A549 (cell line): ENCODE measurements at regions of chr22 and their contacts with region 1.

Region 1: GRCh38 chr22:24938741-24939341 is 7.7 kb downstream of the LHFPL7 start:
- DNase-seq: peak; percentile 40 to 42
- ATAC-seq: peak; percentile 65 to 78; a peak in 4 of 6 replicates
- H3K4me3 ChIP-seq: no peak overlapping the region
- H3K27ac ChIP-seq: no peak overlapping the region
- H3K4me1 ChIP-seq: no peaks in the 10 kb centered on the region
- CTCF ChIP-seq: peak; percentile 70
- EP300 ChIP-seq: no peak
- POLR2A ChIP-seq: no peak
- RAD21 ChIP-seq: peak; percentile 64 to 74

Region 2: DNA sequence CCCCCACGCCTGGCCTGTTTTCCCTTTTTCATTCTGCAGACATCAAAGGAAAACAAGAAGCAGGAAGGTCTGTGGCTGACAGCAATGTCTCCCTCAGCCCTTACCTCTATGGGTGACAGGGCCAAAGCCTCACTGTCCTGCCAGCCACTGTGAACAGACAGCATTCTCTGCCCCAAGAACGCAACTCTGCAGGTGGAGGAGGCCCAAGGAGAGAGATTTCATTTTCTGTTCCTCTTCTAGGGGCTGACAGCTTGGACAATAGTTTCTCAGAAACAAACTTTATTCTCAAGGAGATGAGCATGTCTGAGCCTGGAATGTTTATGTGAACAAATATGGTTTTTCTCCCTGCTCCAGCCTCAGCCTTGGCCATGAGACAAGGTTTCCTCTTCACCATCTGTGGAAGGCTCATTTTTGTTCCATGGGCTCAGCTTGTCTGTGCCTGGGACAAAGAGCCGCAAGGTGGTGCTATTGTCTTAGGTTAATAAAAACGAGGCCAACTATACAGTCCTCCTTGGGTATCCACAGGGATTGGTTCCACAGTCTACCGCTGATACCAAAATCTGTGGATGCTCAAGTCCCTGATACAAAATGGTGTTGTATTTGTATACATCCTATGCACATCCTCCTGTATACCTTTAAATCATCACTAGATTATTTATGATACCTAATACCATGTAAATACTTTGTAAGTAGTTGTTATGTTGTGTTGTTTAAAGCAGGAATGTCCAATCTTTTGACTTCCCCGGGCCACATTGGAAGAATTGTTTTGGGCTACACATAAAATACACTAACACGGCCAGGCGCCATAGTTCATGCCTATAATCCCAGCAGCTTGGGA is 170.1 kb before region 1 on chr22:
- CTCF ChIA-PET with region 1: interaction called, 25 read pairs
- POLR2A ChIA-PET with region 1: no interaction called
- DNase-seq: peak; percentile 61 to 68
- ATAC-seq: peak; percentile 91 to 95
- H3K4me3 ChIP-seq: no peak overlapping the region
- H3K27ac ChIP-seq: no peak overlapping the region
- H3K4me1 ChIP-seq: no peaks in the 10 kb centered on the region
- CTCF ChIP-seq: peak; percentile 58
- EP300 ChIP-seq: no peak
- POLR2A ChIP-seq: no peak
- RAD21 ChIP-seq: peak; percentile 76

Region 3: DNA sequence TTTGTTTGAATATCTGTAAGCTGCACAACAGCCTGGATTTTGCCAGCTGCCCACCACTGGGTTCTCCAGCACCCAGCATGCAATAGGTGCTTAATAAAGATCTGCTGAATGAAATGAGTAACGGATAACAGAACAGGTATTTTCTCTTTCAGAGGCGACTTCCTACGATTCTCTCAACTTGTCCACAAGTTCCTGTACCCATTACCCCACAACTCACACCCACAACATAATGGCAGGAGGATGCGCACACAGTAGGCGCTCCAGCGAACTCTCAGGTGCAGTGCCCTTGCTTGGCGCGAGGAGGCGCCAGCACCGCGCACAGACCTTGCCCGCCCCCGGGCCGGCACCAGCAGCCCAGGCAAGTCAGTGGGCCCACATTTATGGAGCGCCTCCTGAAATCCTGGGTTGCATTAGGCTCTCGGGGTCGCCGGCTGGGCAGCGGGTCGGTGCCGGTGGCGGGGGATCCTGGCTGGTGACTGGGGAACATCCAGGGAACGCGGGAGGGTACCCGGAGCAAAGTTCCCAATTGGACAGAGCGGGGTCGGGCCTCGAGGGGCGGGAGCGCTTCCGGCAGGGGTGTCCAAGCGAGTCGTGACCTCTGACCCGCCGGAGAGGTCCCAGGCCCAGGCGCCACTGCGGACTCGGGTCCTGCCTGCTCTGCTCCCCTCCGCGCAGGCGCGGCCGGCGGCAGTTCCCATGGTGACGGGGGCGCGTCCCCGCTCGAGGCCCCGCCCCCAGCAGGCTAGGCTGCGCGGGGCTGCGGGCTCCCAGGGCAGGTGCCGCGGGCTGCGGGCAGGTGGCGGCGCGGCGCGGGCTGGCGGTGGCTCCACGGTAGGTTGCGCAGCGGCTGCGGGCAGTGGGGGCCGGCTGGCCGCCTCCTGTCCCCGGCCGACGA is 13.3 kb after region 1 on chr22 and contains the start of gene KIAA1671:
- CTCF ChIA-PET with region 1: interaction called, 30 read pairs
- POLR2A ChIA-PET with region 1: no interaction called
- DNase-seq: peak; percentile 71 to 84
- ATAC-seq: peak; percentile 88 to 89
- H3K4me3 ChIP-seq: peak within 1 kb of the TSS; percentile 67
- H3K27ac ChIP-seq: peak within 1 kb of the TSS; percentile 89 to 93
- H3K4me1 ChIP-seq: peaks cover 11% of the 10 kb centered on the region
- CTCF ChIP-seq: peak; percentile 86
- EP300 ChIP-seq: no peak
- POLR2A ChIP-seq: peak; percentile 79
- RAD21 ChIP-seq: peak; percentile 86 to 97
- polyA plus RNA-seq, gene KIAA1671: 7.9 and 8.8 TPM in 2 replicates

Region 4: GRCh38 chr22:25027959-25028840 is 89.4 kb after region 1 on chr22:
- CTCF ChIA-PET with region 1: interaction called, 14 read pairs
- POLR2A ChIA-PET with region 1: no interaction called
- DNase-seq: peak; percentile 31 to 59
- ATAC-seq: peak; percentile 85 to 96; a peak in 5 of 6 replicates
- H3K4me3 ChIP-seq: no peak overlapping the region
- H3K27ac ChIP-seq: peak overlapping the region in 1 of 2 experiments; percentile 69; a peak in 2 of 6 replicates
- H3K4me1 ChIP-seq: peaks cover 17% of the 10 kb centered on the region
- CTCF ChIP-seq: peak; percentile 54
- EP300 ChIP-seq: no peak
- POLR2A ChIP-seq: no peak
- RAD21 ChIP-seq: peak; percentile 74 to 80

Region 5: DNA sequence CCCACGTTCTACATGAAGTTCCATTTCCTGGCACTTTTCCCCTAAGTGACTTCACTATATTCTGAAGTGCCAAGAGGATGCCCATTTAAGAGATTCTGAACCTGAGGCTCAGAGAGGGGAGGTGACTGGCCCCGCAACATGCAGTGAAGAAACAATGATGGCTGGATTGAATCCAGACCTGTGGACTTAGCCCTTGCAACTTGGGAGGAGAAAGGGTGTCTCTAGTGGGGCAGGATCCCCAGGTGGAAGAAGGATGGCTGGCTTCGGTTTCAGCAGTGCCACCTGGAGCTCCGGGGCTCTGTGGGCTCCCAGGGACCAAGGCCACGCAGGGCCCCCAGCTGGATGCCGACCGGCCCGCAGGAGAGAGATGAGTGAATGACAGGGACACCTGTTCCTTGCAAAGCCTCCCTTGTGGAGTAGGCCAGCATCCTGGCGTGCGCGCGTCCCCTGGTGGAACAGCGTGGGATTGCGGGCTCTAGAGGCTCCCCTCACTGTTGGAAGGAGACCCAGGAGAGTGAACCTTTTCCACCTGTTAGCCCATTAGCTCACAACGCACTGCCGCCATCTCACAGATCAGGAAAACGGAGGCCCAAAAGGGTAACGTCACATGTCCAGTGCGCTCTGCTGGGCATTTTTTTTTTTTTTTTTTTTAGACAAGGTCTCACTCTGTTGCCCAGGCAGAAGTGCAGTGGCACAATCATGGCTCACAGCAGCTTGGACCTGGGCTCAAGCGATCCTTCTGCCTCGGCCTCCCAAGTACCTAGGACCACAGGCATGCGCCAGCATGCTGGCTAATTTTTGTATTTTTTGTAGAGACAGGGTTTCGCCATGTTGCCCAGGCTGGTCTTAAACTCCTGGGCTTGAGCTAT is 118.4 kb after region 1 on chr22:
- CTCF ChIA-PET with region 1: interaction called, 112 read pairs
- POLR2A ChIA-PET with region 1: no interaction called
- DNase-seq: peak; percentile 44 to 56
- ATAC-seq: peak; percentile 96 to 98
- H3K4me3 ChIP-seq: no peak overlapping the region
- H3K27ac ChIP-seq: no peak overlapping the region
- H3K4me1 ChIP-seq: peaks cover 7% of the 10 kb centered on the region; the same call in 1 of the 3 replicates
- CTCF ChIP-seq: peak; percentile 65
- EP300 ChIP-seq: no peak
- POLR2A ChIP-seq: no peak
- RAD21 ChIP-seq: peak; percentile 69 to 77